Activated B cell treated with CpG ODN at 0.5 μM for 24 hours (primary cell): ENCODE measurements at regions of chr11 and their contacts with region 1.

Region 1: DNA sequence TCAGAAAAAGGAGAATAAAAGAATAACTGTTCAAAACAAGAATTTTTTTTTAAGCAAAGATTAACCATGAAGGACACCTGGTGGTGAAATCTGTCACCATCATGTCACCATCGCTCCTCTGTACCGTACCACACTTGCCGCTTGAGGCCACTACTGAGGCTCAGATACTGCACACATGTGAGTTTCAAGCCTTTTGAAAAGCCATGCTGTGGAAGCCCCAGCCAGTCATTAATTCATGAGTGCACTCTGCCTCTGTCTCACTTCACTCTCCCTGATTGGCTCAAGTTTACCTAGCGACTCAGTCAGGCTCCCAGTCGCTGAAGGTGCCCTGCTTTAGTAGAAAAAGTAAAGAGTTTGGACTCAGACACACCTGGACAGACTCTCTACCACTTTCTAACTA is 6.6 kb upstream of the MS4A12 start:
- DNase-seq: peak; percentile 40
- ATAC-seq: peak; percentile 95
- H3K4me3 Mint-ChIP-seq: peak overlapping the region; percentile 42
- H3K27ac Mint-ChIP-seq: peak overlapping the region; percentile 63
- H3K4me1 Mint-ChIP-seq: peaks cover 55% of the 10 kb centered on the region
- H3K27me3 Mint-ChIP-seq: no peaks in the 10 kb centered on the region
- CTCF ChIP-seq: peak; percentile 44

Region 2: DNA sequence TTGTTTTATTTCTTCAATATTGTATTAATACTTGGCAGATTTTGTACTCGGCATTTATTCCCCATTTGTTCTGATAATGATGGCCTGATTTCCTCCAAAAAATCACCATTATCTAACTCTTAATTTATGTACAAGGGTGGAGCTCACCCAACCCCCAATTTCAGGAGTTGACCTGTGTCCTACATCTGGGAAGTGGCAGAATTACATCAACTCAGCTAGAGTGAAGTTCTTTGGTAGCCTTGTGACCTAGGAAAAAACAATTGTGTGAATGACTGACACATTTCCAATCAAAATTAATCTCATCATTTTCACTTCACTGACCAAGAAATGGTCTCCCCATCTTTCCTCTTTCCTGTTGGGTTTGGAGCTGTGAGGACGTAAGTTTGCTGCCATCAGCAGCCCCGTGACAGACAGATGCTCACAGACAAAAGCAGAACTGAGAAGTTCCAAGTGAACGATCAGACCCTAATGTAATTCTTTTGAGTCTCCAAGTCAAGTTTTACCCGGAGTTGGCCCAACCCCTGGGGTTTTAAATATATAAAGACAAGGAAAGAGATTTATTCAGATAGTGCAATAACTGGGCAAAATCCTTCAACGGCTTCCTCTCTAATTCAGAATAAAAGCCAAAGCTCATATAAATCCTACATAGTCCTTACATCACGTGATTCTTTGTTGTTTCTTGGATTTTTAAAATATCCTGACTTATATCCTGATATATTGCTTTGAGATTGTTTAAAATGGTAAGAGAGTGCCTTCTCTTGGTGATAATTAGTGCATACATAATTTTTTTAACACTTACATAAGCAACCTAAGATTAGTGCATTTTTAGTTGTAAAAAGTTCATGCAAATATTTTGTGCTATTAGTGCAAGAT is 175.3 kb before region 1 on chr11:
- CTCF ChIA-PET with region 1: no interaction called
- POLR2A ChIA-PET with region 1: interaction called, 5 read pairs
- intact Hi-C with region 1: loop called (anchors 1 kb)
- DNase-seq: no peak
- ATAC-seq: peak; percentile 75
- H3K4me3 Mint-ChIP-seq: peak overlapping the region; percentile 58
- H3K27ac Mint-ChIP-seq: peak overlapping the region; percentile 91
- H3K4me1 Mint-ChIP-seq: peaks cover 49% of the 10 kb centered on the region
- H3K27me3 Mint-ChIP-seq: no peaks in the 10 kb centered on the region
- CTCF ChIP-seq: no peak

Region 3: DNA sequence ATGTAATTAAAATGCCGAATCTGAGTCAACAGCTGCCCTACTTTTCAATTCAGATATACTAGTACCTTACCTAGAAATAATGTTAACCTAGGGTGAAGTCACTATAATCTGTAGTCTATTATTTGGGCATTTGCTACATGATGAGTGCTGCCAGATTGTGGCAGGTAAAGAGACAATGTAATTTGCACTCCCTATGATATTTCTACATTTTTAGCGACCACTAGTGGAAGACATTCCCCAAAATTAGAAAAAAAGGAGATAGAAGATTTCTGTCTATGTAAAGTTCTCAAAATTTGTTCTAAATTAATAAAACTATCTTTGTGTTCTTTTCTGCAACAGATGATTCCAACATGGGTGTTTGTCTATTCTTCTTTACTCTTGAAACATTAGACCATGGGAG is 16.3 kb before region 1 on chr11:
- CTCF ChIA-PET with region 1: no interaction called
- POLR2A ChIA-PET with region 1: interaction called, 24 read pairs
- intact Hi-C with region 1: no loop called
- DNase-seq: no peak
- ATAC-seq: no peak
- H3K4me3 Mint-ChIP-seq: no peak overlapping the region
- H3K27ac Mint-ChIP-seq: peak overlapping the region; percentile 37
- H3K4me1 Mint-ChIP-seq: peaks cover 71% of the 10 kb centered on the region
- H3K27me3 Mint-ChIP-seq: no peaks in the 10 kb centered on the region
- CTCF ChIP-seq: no peak

Region 4: DNA sequence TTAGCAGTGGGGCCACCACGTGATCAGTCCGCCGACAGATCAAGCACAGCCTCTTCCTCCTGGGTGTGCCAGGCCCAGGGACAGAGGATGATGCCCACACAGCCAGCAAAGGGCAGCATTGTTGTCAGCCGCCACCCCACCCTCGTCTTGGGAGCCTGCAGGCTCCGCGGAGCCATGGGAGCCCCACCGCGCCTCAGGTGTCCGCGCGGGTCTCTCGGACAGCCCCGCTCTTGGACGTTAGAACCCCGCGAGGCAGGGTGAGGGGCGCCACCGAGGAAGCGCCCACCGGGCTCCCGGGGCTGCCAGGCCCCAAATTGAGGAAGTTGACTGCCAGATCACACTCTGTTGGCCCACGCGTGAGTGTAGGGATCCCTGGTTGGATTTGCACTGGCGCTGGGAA is 129.5 kb after region 1 on chr11:
- CTCF ChIA-PET with region 1: interaction called, 18 read pairs
- POLR2A ChIA-PET with region 1: no interaction called
- intact Hi-C with region 1: loop called (anchors 1 kb)
- DNase-seq: no peak
- ATAC-seq: no peak
- H3K4me3 Mint-ChIP-seq: no peak overlapping the region
- H3K27ac Mint-ChIP-seq: no peak overlapping the region
- H3K4me1 Mint-ChIP-seq: peaks cover 10% of the 10 kb centered on the region
- H3K27me3 Mint-ChIP-seq: peaks cover 9% of the 10 kb centered on the region
- CTCF ChIP-seq: no peak